Dendritic cell treated with granulocyte-macrophage colony-stimulating factor and Interleukin-4, amounts not matched to agents 40 ng/mL and 50 ng/mL, for 4 days (primary cell): ENCODE measurements at regions of chr13 and their contacts with region 1.

Region 1: GRCh38 chr13:102773441-102774215 is at the start of gene TEX30:
- H3K4me3 Mint-ChIP-seq: peak within 1 kb of the TSS; percentile 79
- H3K27ac Mint-ChIP-seq: peak within 1 kb of the TSS; percentile 84
- H3K4me1 Mint-ChIP-seq: peaks cover 47% of the 10 kb centered on the region
- H3K27me3 Mint-ChIP-seq: no peaks in the 10 kb centered on the region

Region 2: DNA sequence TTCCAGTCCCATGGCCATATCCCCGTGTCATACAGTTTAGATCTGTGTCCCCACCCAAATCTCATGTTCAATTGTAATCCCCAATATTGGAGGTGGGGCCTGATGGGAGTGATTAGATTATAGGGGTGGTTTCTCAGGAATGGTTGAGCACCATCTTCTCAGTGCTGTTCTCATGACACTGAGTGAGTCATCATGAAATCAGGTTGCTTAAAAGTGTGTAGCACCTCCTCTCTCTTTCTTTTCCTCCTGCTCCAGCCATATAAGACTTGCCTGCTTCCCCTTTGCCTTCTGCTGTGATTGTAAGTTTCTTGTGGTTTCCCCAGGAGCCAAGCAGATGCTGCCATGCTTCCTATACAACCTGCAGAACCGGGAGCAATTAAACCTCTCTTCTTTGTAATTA is 1555.1 kb before region 1 on chr13:
- intact Hi-C with region 1: no loop called
- H3K4me3 Mint-ChIP-seq: no peak overlapping the region
- H3K27ac Mint-ChIP-seq: no peak overlapping the region
- H3K4me1 Mint-ChIP-seq: no peaks in the 10 kb centered on the region
- H3K27me3 Mint-ChIP-seq: no peaks in the 10 kb centered on the region

Region 3: GRCh38 chr13:102596147-102597028 is 177.2 kb before region 1 on chr13 and contains the start of gene TPP2:
- intact Hi-C with region 1: loop called (anchors 2 kb)
- H3K4me3 Mint-ChIP-seq: peak within 1 kb of the TSS; percentile 93
- H3K27ac Mint-ChIP-seq: peak within 1 kb of the TSS; percentile 100
- H3K4me1 Mint-ChIP-seq: peaks cover 48% of the 10 kb centered on the region
- H3K27me3 Mint-ChIP-seq: no peaks in the 10 kb centered on the region

Region 4: DNA sequence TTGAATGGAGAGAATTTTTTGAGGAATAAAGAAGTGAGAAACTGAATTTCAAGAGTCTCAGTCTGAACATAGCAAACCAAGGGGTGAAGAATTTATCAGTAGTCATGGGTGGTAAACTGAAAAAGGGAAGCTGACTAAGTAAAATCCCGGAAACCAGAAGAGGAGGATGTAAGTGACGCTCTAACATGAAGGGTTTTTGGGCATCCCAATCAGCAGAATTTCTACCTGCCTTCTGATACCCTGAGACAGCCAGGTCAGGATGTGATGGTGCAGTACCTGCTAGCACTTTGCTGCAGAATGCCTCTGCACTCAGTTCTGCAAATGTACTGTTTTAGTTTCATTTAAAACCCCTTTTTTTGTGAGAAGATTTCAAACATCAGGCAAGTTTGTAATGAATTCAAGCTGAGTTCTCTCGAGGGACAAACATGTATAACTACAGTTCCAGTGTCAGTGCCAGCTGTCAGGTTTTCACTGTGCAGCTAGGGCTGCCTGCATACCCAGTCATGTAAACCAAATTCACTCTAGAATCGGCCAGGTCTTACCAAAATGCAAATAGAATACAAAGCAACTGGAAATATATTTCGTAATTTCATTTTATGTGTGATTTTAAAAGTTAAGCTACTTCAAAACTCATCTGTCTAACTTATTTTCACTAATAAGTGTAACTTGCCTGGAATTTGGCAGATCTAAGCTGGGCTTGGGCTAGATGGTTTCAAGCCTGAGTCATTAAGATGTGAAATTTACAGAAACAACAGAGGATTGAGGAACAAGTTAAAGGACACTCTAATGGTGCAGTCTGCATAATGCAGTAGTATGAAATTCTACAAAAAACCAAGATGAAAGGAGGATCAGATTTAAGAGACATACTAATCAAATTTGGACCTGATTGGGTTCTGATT is 92.5 kb before region 1 on chr13:
- intact Hi-C with region 1: loop called (anchors 10 kb)
- H3K4me3 Mint-ChIP-seq: no peak overlapping the region
- H3K27ac Mint-ChIP-seq: peak overlapping the region; percentile 77
- H3K4me1 Mint-ChIP-seq: peaks cover 35% of the 10 kb centered on the region
- H3K27me3 Mint-ChIP-seq: peaks cover 2% of the 10 kb centered on the region

Region 5: GRCh38 chr13:102800145-102801041 is 26.8 kb after region 1 on chr13:
- intact Hi-C with region 1: loop called (anchors 1 kb)
- H3K4me3 Mint-ChIP-seq: peak overlapping the region; percentile 86
- H3K27ac Mint-ChIP-seq: peak overlapping the region; percentile 70
- H3K4me1 Mint-ChIP-seq: peaks cover 25% of the 10 kb centered on the region
- H3K27me3 Mint-ChIP-seq: peaks cover 30% of the 10 kb centered on the region